Breast epithelium (tissue), 4 donors: ENCODE measurements at regions of chr12 and their contacts with region 1.

Region 1: GRCh38 chr12:85920324-85920947 is 46.3 kb downstream of the NTS start:
- DNase-seq: no peak
- H3K4me3 ChIP-seq: no peak overlapping the region
- H3K27ac ChIP-seq: no peak overlapping the region
- H3K4me1 ChIP-seq: no peaks in the 10 kb centered on the region
- H3K27me3 ChIP-seq: no peaks in the 10 kb centered on the region
- CTCF ChIP-seq: peak; percentile 13 to 56 (median 50)
- POLR2A ChIP-seq: no peak

Region 2: GRCh38 chr12:86959766-86960458 is 1039.5 kb after region 1 on chr12:
- intact Hi-C with region 1: loop called (anchors 5 kb)
- DNase-seq: no peak
- H3K4me3 ChIP-seq: no peak overlapping the region
- H3K27ac ChIP-seq: no peak overlapping the region
- H3K4me1 ChIP-seq: no peaks in the 10 kb centered on the region
- H3K27me3 ChIP-seq: no peaks in the 10 kb centered on the region
- CTCF ChIP-seq: no peak
- POLR2A ChIP-seq: no peak